Activated CD4-positive, alpha-beta T cell treated with anti-CD3 and anti-CD28 coated beads for 36 hours (primary cell): ENCODE measurements at regions of chr2 and their contacts with region 1.

Region 1: DNA sequence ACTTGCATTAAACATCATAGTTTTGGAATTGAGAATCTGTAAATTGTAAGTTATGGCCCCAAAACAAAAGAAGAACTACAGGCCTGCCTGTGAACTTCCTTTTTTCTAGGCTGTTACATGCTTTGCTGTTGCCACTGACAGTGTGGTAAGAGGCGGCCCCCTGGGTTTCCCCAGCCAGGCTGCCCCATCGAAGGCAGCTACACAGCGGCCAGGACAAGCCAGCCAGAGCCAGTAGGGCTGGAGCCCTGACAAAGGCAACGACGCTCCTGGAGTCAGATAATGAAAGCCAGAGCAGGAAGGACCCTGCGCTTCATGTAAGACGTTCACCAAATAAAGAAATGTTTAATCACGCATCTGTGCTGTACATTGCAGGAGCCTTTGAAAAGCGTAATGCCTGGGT is 55.0 kb downstream of the ANKRD44 start:
- DNase-seq: peak; percentile 90
- ATAC-seq: peak; percentile 89
- H3K4me3 Mint-ChIP-seq: peak overlapping the region; percentile 75
- H3K27ac Mint-ChIP-seq: peak overlapping the region; percentile 96
- H3K4me1 Mint-ChIP-seq: peaks cover 80% of the 10 kb centered on the region
- H3K27me3 Mint-ChIP-seq: no peaks in the 10 kb centered on the region

Region 2: GRCh38 chr2:197216361-197216979 is 39.1 kb before region 1 on chr2:
- CTCF ChIA-PET with region 1: interaction called, 4 read pairs
- POLR2A ChIA-PET with region 1: no interaction called
- intact Hi-C with region 1: loop called (anchors 2 kb)
- DNase-seq: no peak
- ATAC-seq: peak; percentile 54
- H3K4me3 Mint-ChIP-seq: peak overlapping the region; percentile 70
- H3K27ac Mint-ChIP-seq: peak overlapping the region; percentile 99
- H3K4me1 Mint-ChIP-seq: peaks cover 88% of the 10 kb centered on the region
- H3K27me3 Mint-ChIP-seq: no peaks in the 10 kb centered on the region

Region 3: DNA sequence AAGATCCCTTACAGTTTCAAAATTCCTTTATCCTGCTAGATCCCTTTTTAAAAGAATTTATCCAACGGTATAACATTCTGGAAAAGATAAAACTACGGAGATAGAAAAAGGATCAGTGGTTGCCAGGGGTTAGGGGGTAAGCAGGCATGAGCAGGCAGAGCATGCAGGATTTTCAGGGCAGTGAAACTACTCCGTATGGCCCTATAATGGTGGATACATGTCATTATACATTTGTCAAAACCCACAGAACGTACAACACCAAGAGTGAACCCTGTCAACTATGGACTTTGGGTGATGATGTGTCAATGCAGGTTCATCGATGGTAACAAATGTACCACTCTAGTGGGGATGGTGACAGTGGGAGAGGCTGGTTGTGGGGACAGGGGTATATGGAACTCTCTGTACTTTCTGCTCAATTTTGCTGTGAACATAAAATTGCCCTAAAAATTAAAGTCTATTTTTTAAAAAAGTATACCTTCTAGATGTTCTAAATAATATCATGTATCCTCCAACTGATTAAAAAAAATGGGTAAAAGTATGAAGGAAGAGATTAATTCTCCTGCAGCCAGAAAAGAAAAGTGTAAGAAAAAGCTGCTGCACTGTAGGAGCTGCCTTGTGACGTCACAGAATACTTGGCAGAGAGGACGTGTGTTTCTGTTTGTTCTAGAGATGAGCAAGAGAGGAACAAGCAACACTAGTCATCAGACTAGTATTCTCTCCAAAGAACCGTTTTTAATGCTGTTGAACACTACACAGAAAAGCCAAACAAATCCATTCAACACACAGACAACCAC is 31.5 kb after region 1 on chr2:
- CTCF ChIA-PET with region 1: interaction called, 4 read pairs
- POLR2A ChIA-PET with region 1: interaction called, 4 read pairs
- intact Hi-C with region 1: loop called in 1 of 2 experiments (anchors 1 kb)
- DNase-seq: peak; percentile 70
- ATAC-seq: peak; percentile 92
- H3K4me3 Mint-ChIP-seq: peak overlapping the region; percentile 65
- H3K27ac Mint-ChIP-seq: peak overlapping the region; percentile 100
- H3K4me1 Mint-ChIP-seq: peaks cover 81% of the 10 kb centered on the region
- H3K27me3 Mint-ChIP-seq: no peaks in the 10 kb centered on the region

Region 4: GRCh38 chr2:197324801-197325200 is 69.3 kb after region 1 on chr2:
- CTCF ChIA-PET with region 1: no interaction called
- POLR2A ChIA-PET with region 1: interaction called, 13 read pairs
- intact Hi-C with region 1: no loop called
- DNase-seq: no peak
- ATAC-seq: no peak
- H3K4me3 Mint-ChIP-seq: peak overlapping the region; percentile 55
- H3K27ac Mint-ChIP-seq: peak overlapping the region; percentile 93
- H3K4me1 Mint-ChIP-seq: peaks cover 81% of the 10 kb centered on the region
- H3K27me3 Mint-ChIP-seq: no peaks in the 10 kb centered on the region

Region 5: GRCh38 chr2:198483051-198483450 is 1227.5 kb after region 1 on chr2:
- CTCF ChIA-PET with region 1: no interaction called
- POLR2A ChIA-PET with region 1: no interaction called
- intact Hi-C with region 1: no loop called
- DNase-seq: no peak
- ATAC-seq: no peak
- H3K4me3 Mint-ChIP-seq: no peak overlapping the region
- H3K27ac Mint-ChIP-seq: no peak overlapping the region
- H3K4me1 Mint-ChIP-seq: no peaks in the 10 kb centered on the region
- H3K27me3 Mint-ChIP-seq: peaks cover 3% of the 10 kb centered on the region